Activated T-helper 1 cell treated with anti-CD3 and anti-CD28 coated beads, Interleukin-12 subunit alpha, Interleukin-12 subunit beta, Interleukin-2, Interleukin-4 antibody, amounts not matched to agents 30 ng/mL and 10 ng/mL and 1 ng/mL, durations not matched to agents 14 hours and 24 hours and 36 hours (primary cell): ENCODE measurements at regions of chr5 and their contacts with region 1.

Region 1: DNA sequence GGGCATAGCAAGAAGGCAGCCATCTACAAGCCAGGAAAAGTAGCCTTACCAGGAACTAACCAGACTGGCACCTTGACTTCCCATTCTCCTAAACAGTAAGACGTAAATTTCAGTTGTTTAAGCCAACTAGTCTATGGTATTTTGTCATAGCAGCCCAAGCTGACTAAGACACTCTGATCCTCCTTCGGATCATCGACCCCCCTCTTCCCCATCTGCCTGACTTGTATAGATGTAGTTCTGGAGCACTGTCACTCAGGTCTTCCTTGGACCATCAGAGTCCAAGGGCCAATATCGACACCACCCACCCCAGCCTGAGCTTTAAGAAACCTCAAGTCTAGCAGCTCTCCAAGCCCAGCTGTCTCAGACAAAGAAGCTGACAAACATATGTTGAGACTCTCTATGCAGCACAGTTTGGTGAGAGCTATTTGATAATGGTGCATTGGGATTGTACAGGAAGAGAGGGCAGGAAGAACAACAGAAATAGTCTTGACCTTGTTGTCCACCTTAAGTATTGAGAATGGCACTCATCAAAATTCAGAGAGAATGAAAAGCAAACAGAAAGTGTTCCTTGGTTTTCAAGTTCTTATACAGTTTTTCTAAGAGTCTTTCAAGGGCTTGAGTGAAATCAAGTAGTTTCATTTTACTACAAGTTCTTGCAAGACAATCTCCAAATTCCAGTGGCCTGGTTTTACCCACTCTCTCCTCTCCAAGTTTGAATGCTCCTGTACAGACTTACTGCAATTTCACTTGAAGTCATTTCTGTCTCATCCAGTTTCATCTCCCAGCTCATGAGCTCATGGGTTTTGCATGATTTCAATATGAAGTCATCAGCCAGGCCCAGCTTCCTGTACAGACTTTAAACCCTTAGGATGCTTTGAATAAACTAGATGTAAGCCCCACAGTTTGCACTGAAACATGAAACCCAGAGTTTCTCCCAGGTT is 122.3 kb upstream of the RAI14 start:
- DNase-seq: no peak
- H3K4me3 Mint-ChIP-seq: no peak overlapping the region
- H3K27ac Mint-ChIP-seq: peak overlapping the region; percentile 14
- H3K4me1 Mint-ChIP-seq: peaks cover 5% of the 10 kb centered on the region
- H3K27me3 Mint-ChIP-seq: peaks cover 6% of the 10 kb centered on the region

Region 2: GRCh38 chr5:34474573-34475021 is 59.3 kb before region 1 on chr5:
- intact Hi-C with region 1: loop called (anchors 5 kb)
- DNase-seq: no peak
- H3K4me3 Mint-ChIP-seq: no peak overlapping the region
- H3K27ac Mint-ChIP-seq: no peak overlapping the region
- H3K4me1 Mint-ChIP-seq: no peaks in the 10 kb centered on the region
- H3K27me3 Mint-ChIP-seq: peaks cover 2% of the 10 kb centered on the region

Region 3: GRCh38 chr5:34486160-34486848 is 47.5 kb before region 1 on chr5:
- intact Hi-C with region 1: loop called (anchors 1 kb)
- DNase-seq: peak; percentile 26
- H3K4me3 Mint-ChIP-seq: no peak overlapping the region
- H3K27ac Mint-ChIP-seq: no peak overlapping the region
- H3K4me1 Mint-ChIP-seq: no peaks in the 10 kb centered on the region
- H3K27me3 Mint-ChIP-seq: peaks cover 18% of the 10 kb centered on the region

Region 4: DNA sequence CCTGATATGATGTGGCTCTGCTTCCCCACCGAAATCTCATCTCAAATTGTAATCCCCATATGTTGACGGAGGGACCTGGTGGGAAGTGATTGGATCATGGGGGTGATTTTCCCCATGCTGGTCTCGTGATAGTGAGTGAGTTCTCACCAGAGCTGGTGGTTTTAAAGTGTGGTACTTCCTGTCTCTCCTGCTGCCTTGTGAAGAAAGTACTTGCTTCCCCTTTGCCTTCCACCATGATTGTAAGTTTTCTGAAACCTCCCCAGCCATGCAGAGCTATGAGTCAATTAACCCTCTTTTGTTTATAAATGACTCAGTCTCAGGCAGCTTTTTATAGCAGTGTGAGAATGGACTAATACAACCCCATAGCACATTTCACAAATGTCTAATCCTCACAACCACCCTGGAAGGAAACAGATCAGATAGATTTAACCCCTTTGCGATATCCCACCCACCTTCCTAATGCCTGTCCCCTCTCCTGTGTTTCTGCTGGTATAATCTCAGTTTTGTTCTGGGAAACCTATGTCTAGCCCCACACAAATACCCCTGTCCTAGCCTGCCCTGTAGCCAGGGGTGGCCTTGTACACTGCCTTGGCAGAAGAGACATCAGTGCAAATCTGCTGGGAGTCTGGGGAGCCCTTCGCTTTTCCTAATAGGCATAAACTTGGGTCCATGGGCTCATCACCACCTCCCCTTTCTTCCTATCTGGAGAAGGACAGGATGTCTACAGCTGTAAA is 34.7 kb before region 1 on chr5:
- intact Hi-C with region 1: loop called (anchors 2 kb)
- DNase-seq: peak; percentile 2
- H3K4me3 Mint-ChIP-seq: no peak overlapping the region
- H3K27ac Mint-ChIP-seq: peak overlapping the region; percentile 36
- H3K4me1 Mint-ChIP-seq: peaks cover 14% of the 10 kb centered on the region
- H3K27me3 Mint-ChIP-seq: peaks cover 5% of the 10 kb centered on the region